Ovary (tissue), 10 donors: ENCODE measurements at regions of chr4 and their contacts with region 1.

Region 1: GRCh38 chr4:11428899-11429698 is 405 bp upstream of the HS3ST1 start:
- DNase-seq: peak; percentile 91 to 95 (median 92)
- H3K4me3 ChIP-seq: peak overlapping the region; percentile 47
- H3K27ac ChIP-seq: peak overlapping the region; percentile 71 to 80
- H3K4me1 ChIP-seq: peaks cover 9% of the 10 kb centered on the region
- H3K27me3 ChIP-seq: no peaks in the 10 kb centered on the region
- CTCF ChIP-seq: peak; percentile 74 to 86 (median 78)
- EP300 ChIP-seq: no peak
- POLR2A ChIP-seq: no peak

Region 2: GRCh38 chr4:10582059-10582686 is 846.9 kb before region 1 on chr4:
- intact Hi-C with region 1: loop called in 2 of 4 experiments (anchors 5 to 10 kb)
- DNase-seq: peak; percentile 47 to 69 (median 56)
- H3K4me3 ChIP-seq: no peak overlapping the region
- H3K27ac ChIP-seq: peak overlapping the region in 1 of 2 donors; percentile 3
- H3K4me1 ChIP-seq: peaks cover 1% of the 10 kb centered on the region
- H3K27me3 ChIP-seq: no peaks in the 10 kb centered on the region
- CTCF ChIP-seq: peak; percentile 88 to 91 (median 90)
- EP300 ChIP-seq: no peak
- POLR2A ChIP-seq: no peak

Region 3: DNA sequence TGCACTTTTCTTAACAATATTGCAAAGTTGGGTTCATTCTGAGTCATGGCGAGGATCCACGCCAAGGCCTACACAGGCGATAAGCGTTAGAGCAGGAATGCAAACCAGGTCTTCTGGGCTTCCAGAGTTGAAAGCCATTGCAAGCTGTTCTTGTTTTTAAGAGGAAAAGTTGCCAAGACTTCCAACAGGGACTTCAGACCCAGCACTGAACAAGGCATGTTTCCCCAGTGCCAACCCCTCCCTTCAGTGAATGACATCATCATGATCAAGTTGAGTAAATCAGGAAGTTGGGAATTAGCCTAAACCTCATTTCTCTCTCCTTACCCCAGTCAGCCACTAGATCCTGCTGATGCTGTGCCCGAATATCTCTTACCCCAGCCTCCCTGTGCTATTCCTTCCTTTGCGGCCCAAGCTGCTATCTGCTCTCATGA is 355.5 kb before region 1 on chr4:
- intact Hi-C with region 1: loop called in 3 of 4 experiments (anchors 5 to 10 kb)
- DNase-seq: peak; percentile 67 to 81 (median 77)
- H3K4me3 ChIP-seq: no peak overlapping the region
- H3K27ac ChIP-seq: peak overlapping the region; percentile 61 to 73
- H3K4me1 ChIP-seq: peaks cover 14% of the 10 kb centered on the region
- H3K27me3 ChIP-seq: no peaks in the 10 kb centered on the region
- CTCF ChIP-seq: peak in 1 of 3 donors; percentile 18
- EP300 ChIP-seq: no peak
- POLR2A ChIP-seq: no peak

Region 4: DNA sequence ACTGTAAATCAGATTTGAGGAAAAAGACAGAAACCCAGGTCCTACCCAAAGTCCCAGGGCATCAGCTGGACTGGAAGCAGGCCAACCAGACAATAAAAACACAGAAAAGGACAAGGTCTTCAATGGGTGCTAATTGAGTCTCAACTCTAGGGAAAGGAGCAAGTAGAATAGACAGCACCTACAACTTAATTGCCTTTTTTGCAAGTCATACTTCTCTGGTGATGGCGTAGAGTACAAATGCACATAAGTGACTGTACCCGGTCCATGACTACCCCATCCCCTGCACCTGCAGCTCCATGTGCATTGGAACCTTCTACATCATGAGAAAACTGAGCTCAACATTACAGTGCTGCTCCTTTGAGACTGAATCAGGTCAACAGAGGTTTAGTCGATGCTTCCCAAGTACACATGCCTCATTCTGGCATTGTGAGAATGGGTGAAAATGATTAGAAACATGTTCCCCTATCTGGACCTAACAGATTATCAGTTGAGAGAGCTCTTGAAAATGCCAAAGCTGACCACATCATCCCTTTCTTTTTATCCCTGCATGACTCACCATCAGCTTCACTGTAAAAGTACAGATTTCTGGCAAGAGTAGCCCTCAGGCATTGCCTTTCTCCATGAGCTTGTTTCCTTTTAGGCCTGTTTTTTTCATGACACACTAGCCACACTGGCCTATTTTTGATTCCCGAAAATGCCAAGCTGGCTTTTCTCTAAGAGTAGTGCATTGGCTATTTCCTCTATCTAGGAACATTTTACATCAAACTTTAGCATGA is 298.7 kb before region 1 on chr4:
- intact Hi-C with region 1: no loop called
- DNase-seq: peak in 1 of 5 donors; percentile 8
- H3K4me3 ChIP-seq: no peak overlapping the region
- H3K27ac ChIP-seq: no peak overlapping the region
- H3K4me1 ChIP-seq: peaks cover 2% of the 10 kb centered on the region
- H3K27me3 ChIP-seq: no peaks in the 10 kb centered on the region
- CTCF ChIP-seq: no peak
- EP300 ChIP-seq: no peak
- POLR2A ChIP-seq: no peak

Region 5: GRCh38 chr4:11471618-11472017 is 42.5 kb after region 1 on chr4:
- intact Hi-C with region 1: no loop called
- DNase-seq: no peak
- H3K4me3 ChIP-seq: no peak overlapping the region
- H3K27ac ChIP-seq: no peak overlapping the region
- H3K4me1 ChIP-seq: no peaks in the 10 kb centered on the region
- H3K27me3 ChIP-seq: no peaks in the 10 kb centered on the region
- CTCF ChIP-seq: no peak
- EP300 ChIP-seq: no peak
- POLR2A ChIP-seq: no peak